Activated CD4-positive, alpha-beta memory T cell treated with anti-CD3 and anti-CD28 coated beads for 36 hours (primary cell): ENCODE measurements at regions of chr14 and their contacts with region 1.

Region 1: DNA sequence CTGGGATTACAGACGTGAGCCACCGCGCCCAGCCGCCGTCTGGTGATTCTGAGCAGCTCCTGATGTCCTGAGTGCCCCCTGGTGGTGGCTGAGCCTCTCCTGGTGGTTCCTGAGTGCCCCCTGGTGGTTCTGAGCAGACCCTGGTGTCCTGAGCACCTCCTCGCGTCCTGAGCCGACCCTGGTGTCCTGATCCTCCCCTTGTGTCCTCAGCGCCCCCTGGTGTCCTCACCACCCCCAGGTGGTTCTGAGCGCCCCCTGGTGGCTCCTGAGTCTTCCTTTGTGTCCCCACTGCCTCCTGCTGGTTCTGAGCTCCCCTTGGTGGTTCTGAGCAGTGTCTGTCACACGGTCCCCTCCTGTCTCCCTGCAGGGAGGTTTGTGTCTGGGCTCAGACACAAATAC is 1304.9 kb downstream of the TMEM121 start:
- DNase-seq: peak; percentile 82
- H3K4me3 Mint-ChIP-seq: no peak overlapping the region
- H3K27ac Mint-ChIP-seq: no peak overlapping the region
- H3K4me1 Mint-ChIP-seq: no peaks in the 10 kb centered on the region
- H3K27me3 Mint-ChIP-seq: peaks cover 6% of the 10 kb centered on the region

Region 2: DNA sequence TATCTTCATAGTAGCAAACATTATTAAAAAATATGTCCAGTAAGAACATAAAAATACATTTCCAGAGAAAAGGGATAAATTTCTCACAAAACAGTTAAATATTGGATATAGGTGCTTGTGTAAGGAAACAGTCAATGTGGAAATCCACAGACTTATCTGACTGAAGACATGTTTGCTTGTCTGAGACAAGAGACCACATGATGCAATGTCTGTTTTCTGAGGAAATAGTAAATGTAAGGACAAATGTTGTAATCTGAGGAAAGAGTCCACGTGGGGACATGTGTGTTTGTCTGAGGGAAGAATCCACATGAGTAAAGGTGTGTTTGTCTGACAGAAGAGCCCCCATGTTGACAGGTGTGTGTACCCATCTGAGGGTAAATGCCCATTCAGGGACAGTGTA is 211.7 kb before region 1 on chr14:
- CTCF ChIA-PET with region 1: no interaction called
- POLR2A ChIA-PET with region 1: no interaction called
- intact Hi-C with region 1: no loop called
- DNase-seq: no peak
- H3K4me3 Mint-ChIP-seq: no peak overlapping the region
- H3K27ac Mint-ChIP-seq: no peak overlapping the region
- H3K4me1 Mint-ChIP-seq: peaks cover 6% of the 10 kb centered on the region
- H3K27me3 Mint-ChIP-seq: peaks cover 20% of the 10 kb centered on the region

Region 3: GRCh38 chr14:106631879-106632278 is 199.4 kb before region 1 on chr14:
- CTCF ChIA-PET with region 1: no interaction called
- POLR2A ChIA-PET with region 1: no interaction called
- intact Hi-C with region 1: no loop called
- DNase-seq: no peak
- H3K4me3 Mint-ChIP-seq: no peak overlapping the region
- H3K27ac Mint-ChIP-seq: no peak overlapping the region
- H3K4me1 Mint-ChIP-seq: peaks cover 3% of the 10 kb centered on the region
- H3K27me3 Mint-ChIP-seq: peaks cover 16% of the 10 kb centered on the region

Region 4: GRCh38 chr14:106776395-106776983 is 54.8 kb before region 1 on chr14:
- CTCF ChIA-PET with region 1: interaction called, 18 read pairs
- POLR2A ChIA-PET with region 1: no interaction called
- intact Hi-C with region 1: no loop called
- DNase-seq: no peak
- H3K4me3 Mint-ChIP-seq: no peak overlapping the region
- H3K27ac Mint-ChIP-seq: no peak overlapping the region
- H3K4me1 Mint-ChIP-seq: peaks cover 24% of the 10 kb centered on the region
- H3K27me3 Mint-ChIP-seq: peaks cover 2% of the 10 kb centered on the region

Region 5: GRCh38 chr14:106802423-106803364 is 28.6 kb before region 1 on chr14:
- CTCF ChIA-PET with region 1: interaction called, 11 read pairs
- POLR2A ChIA-PET with region 1: no interaction called
- intact Hi-C with region 1: no loop called
- DNase-seq: no peak
- H3K4me3 Mint-ChIP-seq: no peak overlapping the region
- H3K27ac Mint-ChIP-seq: no peak overlapping the region
- H3K4me1 Mint-ChIP-seq: no peaks in the 10 kb centered on the region
- H3K27me3 Mint-ChIP-seq: peaks cover 47% of the 10 kb centered on the region

Region 6: DNA sequence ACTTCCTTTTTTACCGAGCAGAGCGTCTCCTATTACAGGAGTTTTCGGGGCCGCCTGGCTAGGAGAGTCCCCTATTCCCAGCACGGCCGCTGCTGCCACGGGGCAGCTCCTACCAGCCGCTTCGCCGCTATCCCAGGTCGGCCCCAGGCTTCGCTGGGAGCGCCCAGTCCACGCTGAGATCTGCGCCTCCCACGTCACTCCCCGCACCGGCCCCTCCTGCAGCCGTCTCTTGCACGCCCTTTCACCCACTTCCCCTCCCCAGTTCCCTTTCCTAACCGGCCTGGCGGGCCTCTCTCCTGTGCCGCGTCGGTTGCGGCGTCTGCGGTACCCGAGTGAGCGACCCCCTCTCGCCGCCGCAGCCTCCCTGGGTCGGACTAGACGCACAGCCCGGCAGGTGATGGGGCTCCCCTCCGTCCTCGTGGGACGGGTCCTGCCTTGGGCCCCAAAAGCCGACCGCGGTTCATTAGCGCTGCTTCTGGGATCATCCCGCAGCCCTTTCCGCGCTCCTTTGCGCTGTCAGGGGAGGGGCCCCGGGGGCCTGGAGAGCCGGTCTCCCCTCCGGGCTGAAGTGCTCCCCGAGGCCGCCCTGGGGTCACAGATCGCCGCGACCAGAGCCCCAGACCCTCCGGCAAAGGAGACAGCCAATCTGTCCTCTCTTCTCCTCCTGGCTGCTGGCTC is 13.4 kb after region 1 on chr14:
- CTCF ChIA-PET with region 1: interaction called, 106 read pairs
- POLR2A ChIA-PET with region 1: no interaction called
- intact Hi-C with region 1: no loop called
- DNase-seq: peak; percentile 69
- H3K4me3 Mint-ChIP-seq: peak overlapping the region; percentile 87
- H3K27ac Mint-ChIP-seq: peak overlapping the region; percentile 47
- H3K4me1 Mint-ChIP-seq: peaks cover 29% of the 10 kb centered on the region
- H3K27me3 Mint-ChIP-seq: no peaks in the 10 kb centered on the region

Region 7: GRCh38 chr14:106872611-106873446 is 41.5 kb after region 1 on chr14:
- CTCF ChIA-PET with region 1: interaction called, 61 read pairs
- POLR2A ChIA-PET with region 1: no interaction called
- intact Hi-C with region 1: no loop called
- DNase-seq: peak; percentile 95
- H3K4me3 Mint-ChIP-seq: peak overlapping the region; percentile 32
- H3K27ac Mint-ChIP-seq: peak overlapping the region; percentile 25
- H3K4me1 Mint-ChIP-seq: peaks cover 14% of the 10 kb centered on the region
- H3K27me3 Mint-ChIP-seq: peaks cover 31% of the 10 kb centered on the region